Natural killer cell (primary cell): ENCODE measurements at regions of chr17 and their contacts with region 1.

Region 1: GRCh38 chr17:77011173-77012011 is 129.4 kb upstream of the SEC14L1 start:
- DNase-seq: peak; percentile 24 to 77
- ATAC-seq: peak in 2 of 3 donors; percentile 53 to 56
- H3K4me3 ChIP-seq: no peak overlapping the region
- H3K4me3 Mint-ChIP-seq: no peak overlapping the region
- H3K27ac ChIP-seq: no peak overlapping the region
- H3K27ac Mint-ChIP-seq: no peak overlapping the region
- H3K4me1 ChIP-seq: no peaks in the 10 kb centered on the region
- H3K4me1 Mint-ChIP-seq: no peaks in the 10 kb centered on the region
- H3K27me3 ChIP-seq: no peaks in the 10 kb centered on the region
- H3K27me3 Mint-ChIP-seq: peaks cover 0 to 10% of the 10 kb centered on the region in 2 donors
- CTCF ChIP-seq: peak; percentile 66

Region 2: DNA sequence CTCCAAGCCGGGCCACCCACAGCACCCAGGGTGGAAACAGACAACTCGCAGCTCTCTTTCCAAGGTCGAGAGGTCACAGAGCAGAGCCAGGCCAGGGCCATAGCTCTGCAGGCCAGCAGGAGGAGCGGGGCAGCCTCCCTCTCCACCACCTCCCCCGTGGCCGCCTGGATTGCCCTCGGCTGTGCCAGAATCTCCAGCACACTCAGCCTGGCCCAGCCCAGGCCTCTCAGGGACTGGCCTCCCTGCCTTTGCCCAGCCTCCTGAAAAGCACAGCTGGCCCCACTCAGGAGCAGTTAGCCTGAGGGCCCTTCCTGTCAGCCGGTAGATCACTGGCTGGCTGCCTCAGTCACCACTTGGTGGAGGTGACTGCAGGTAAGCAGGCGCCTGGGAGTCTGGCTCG is 43.5 kb after region 1 on chr17:
- intact Hi-C with region 1: loop called (anchors 1 kb)
- DNase-seq: no peak
- ATAC-seq: no peak
- H3K4me3 ChIP-seq: no peak overlapping the region
- H3K4me3 Mint-ChIP-seq: no peak overlapping the region
- H3K27ac ChIP-seq: no peak overlapping the region
- H3K27ac Mint-ChIP-seq: no peak overlapping the region
- H3K4me1 ChIP-seq: peaks cover 5% of the 10 kb centered on the region
- H3K4me1 Mint-ChIP-seq: peaks cover 5% of the 10 kb centered on the region in 2 donors
- H3K27me3 ChIP-seq: no peaks in the 10 kb centered on the region
- H3K27me3 Mint-ChIP-seq: peaks cover 0 to 9% of the 10 kb centered on the region in 2 donors
- CTCF ChIP-seq: no peak

Region 3: GRCh38 chr17:77109764-77110359 is 98.5 kb after region 1 on chr17:
- intact Hi-C with region 1: no loop called
- DNase-seq: no peak
- ATAC-seq: peak in 1 of 3 donors; percentile 34
- H3K4me3 ChIP-seq: no peak overlapping the region
- H3K4me3 Mint-ChIP-seq: peak overlapping the region; percentile 37
- H3K27ac ChIP-seq: no peak overlapping the region
- H3K27ac Mint-ChIP-seq: peak overlapping the region; percentile 36 to 69
- H3K4me1 ChIP-seq: peaks cover 38% of the 10 kb centered on the region
- H3K4me1 Mint-ChIP-seq: peaks cover 18 to 22% of the 10 kb centered on the region in 2 donors
- H3K27me3 ChIP-seq: no peaks in the 10 kb centered on the region
- H3K27me3 Mint-ChIP-seq: no peaks in the 10 kb centered on the region
- CTCF ChIP-seq: no peak